GM12878 (cell line): ENCODE measurements at regions of chr3 and their contacts with region 1.

Region 1: GRCh38 chr3:129809297-129809696 is 84.2 kb downstream of the TMCC1 start:
- DNase-seq: no peak
- ATAC-seq: no peak
- H3K4me3 ChIP-seq: no peak overlapping the region
- H3K27ac ChIP-seq: no peak overlapping the region
- H3K4me1 ChIP-seq: no peaks in the 10 kb centered on the region
- H3K27me3 ChIP-seq: no peaks in the 10 kb centered on the region
- CTCF ChIP-seq: no peak
- EP300 ChIP-seq: no peak
- POLR2A ChIP-seq: no peak
- RAD21 ChIP-seq: no peak

Region 2: DNA sequence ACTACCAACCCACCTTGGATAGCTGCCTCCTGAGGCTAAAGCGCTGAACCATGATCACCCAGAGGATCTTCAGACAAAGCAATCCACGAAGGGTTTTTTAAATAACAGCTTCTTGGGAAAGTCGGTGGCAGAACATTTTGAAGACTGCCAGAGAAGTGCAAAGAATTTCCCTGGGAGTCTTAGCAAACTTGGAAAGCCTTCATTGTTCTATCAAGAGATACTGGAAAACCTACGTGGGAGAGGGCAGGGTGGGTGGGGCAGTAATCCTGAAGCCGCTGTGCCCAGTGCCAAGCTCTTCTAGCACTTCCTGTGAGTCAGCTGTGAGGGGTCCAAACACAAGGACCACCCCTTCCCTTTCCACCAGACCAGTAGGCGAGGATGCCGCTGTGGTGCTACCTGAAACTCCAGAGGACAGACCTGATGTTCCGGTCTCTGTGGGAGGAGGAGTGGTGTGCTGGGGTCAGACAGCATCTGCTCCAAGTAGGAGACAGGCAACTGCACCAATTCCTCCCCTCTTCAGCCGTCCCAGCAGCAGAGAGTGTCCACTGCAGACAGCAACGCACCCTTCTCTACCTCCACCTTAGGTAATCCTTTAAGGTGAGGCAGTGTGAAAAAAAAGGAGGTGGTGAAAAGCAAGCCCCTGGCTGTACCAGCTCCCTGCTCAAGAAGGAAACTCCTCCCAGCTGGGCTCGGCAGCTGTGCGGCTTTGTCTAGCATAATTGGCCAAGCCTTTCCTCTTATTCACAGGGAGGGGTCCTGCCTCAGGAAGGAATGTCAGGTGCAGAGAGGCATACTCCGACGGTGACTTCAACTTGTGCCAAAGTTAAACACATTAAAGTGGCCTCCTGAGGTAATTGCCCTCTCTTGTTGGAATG is 14.7 kb before region 1 on chr3:
- CTCF ChIA-PET with region 1: interaction called, 13 read pairs
- POLR2A ChIA-PET with region 1: interaction called, 3 read pairs
- RAD21 ChIA-PET with region 1: no interaction called
- SMC1A ChIA-PET with region 1: interaction called, 3 read pairs
- in situ Hi-C with region 1: no loop called
- intact Hi-C with region 1: no loop called
- DNase-seq: no peak
- ATAC-seq: peak; percentile 38
- H3K4me3 ChIP-seq: no peak overlapping the region
- H3K27ac ChIP-seq: no peak overlapping the region
- H3K4me1 ChIP-seq: peaks cover 16% of the 10 kb centered on the region
- H3K27me3 ChIP-seq: no peaks in the 10 kb centered on the region
- CTCF ChIP-seq: no peak
- EP300 ChIP-seq: no peak
- POLR2A ChIP-seq: no peak
- RAD21 ChIP-seq: no peak